B cell (primary cell): ENCODE measurements at regions of chr17 and their contacts with region 1.

Region 1: DNA sequence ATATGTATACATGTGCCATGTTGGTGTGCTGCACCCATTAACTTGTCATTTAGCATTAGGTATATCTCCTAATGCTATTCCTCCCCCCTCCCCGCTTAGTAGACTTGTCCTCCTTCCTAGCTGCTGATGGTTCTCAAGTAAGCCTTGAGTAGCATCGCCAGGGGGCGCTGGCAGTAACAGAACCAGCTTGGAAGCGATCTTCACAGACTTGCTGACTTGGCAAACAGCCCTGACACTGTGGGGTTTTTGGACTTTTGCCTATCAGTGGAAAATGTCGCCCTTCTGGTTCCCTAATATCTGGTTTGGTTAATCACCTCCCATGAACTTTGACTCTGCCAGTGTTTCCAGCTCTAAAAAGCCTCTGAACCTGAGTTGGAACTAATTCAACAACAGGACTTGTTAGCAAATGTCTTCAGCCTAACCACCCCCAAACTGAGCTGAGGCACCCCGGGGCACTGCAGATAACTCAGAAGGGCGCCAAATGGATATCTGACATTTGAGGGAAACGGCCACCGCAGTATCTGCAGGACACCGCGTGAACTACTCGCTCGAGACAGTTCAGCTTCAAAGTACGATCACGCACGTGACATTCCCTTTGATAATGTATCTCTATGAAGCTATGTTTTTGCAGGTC is 15.4 kb upstream of the SPATA32 start:
- DNase-seq: peak; percentile 91
- ATAC-seq: peak; percentile 94
- H3K4me3 ChIP-seq: no peak overlapping the region
- H3K4me3 Mint-ChIP-seq: no peak overlapping the region
- H3K27ac ChIP-seq: peak overlapping the region in 1 of 2 donors; percentile 48
- H3K27ac Mint-ChIP-seq: no peak overlapping the region
- H3K4me1 ChIP-seq: peaks cover 4 to 5% of the 10 kb centered on the region in 2 donors
- H3K4me1 Mint-ChIP-seq: peaks cover 6% of the 10 kb centered on the region
- H3K27me3 ChIP-seq: no peaks in the 10 kb centered on the region
- H3K27me3 Mint-ChIP-seq: no peaks in the 10 kb centered on the region
- CTCF ChIP-seq: peak; percentile 77

Region 2: DNA sequence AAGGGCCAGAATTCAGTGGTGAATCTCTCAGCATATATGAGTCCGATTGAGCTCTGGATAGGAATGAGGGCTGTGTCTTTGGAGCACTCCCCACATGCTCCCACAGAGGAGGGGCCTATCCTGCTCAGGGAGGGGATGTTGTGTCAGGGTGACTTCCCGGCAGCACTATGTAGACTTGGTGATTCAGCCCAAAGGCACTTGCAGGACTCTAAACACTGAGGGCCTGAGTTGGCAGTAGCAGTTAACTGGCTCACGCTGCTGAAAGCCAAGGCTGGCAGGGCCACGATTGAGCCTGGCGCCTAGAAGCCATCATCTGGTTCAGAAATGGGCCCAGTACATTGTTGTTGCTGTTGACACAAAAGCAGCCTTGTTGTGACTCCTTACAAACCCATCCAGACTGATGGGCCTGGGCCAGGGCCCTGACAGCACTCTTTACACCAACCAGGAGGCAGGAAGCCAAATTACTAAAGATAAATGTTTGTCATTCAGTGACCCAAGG is 184.4 kb before region 1 on chr17:
- CTCF ChIA-PET with region 1: no interaction called
- POLR2A ChIA-PET with region 1: no interaction called
- intact Hi-C with region 1: no loop called
- DNase-seq: no peak
- ATAC-seq: no peak
- H3K4me3 ChIP-seq: no peak overlapping the region
- H3K4me3 Mint-ChIP-seq: no peak overlapping the region
- H3K27ac ChIP-seq: no peak overlapping the region
- H3K27ac Mint-ChIP-seq: no peak overlapping the region
- H3K4me1 ChIP-seq: no peaks in the 10 kb centered on the region
- H3K4me1 Mint-ChIP-seq: peaks cover 2% of the 10 kb centered on the region
- H3K27me3 ChIP-seq: no peaks in the 10 kb centered on the region
- H3K27me3 Mint-ChIP-seq: no peaks in the 10 kb centered on the region
- CTCF ChIP-seq: no peak

Region 3: DNA sequence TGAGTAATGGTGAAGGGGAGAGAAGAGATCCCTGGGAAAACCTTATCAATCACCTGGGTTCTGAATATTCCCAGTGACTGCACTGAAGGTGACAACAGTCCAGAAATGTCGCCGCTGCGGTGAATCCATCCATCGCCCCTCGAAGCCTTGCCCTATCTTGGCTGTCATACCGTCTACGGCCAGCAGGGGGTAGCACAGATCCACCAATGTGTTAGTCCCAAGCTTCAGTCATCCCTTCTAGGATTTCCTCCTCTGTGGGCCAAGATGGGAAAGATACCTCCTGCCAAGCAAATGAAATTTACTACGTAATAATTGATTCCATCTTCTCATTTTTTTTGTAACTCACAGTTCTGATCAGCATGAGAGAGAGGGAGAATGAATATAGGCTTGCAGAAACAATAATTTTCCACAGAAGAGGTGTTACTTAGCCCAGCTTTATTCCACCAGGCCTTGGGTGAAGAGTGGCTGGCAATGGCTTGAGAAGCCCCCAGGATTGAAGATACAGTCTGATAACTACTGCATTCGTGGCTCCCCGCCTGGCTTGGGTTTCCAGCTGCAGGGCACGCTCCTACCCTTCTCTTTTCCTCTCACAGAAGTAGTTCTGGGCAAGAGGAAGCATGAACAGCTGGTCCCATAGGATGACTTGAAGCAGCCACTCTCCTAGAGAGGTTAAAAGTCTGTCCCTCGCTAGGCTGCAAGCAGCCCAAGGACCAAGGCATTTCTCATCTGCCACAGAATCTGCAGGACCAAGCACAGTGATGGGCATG is 58.3 kb before region 1 on chr17:
- CTCF ChIA-PET with region 1: interaction called, 115 read pairs
- POLR2A ChIA-PET with region 1: interaction called, 6 read pairs
- intact Hi-C with region 1: loop called (anchors 2 kb)
- DNase-seq: peak; percentile 88
- ATAC-seq: peak; percentile 28
- H3K4me3 ChIP-seq: no peak overlapping the region
- H3K4me3 Mint-ChIP-seq: peak overlapping the region; percentile 86
- H3K27ac ChIP-seq: no peak overlapping the region
- H3K27ac Mint-ChIP-seq: peak overlapping the region; percentile 82
- H3K4me1 ChIP-seq: peaks cover 19 to 37% of the 10 kb centered on the region in 2 donors
- H3K4me1 Mint-ChIP-seq: peaks cover 33% of the 10 kb centered on the region
- H3K27me3 ChIP-seq: no peaks in the 10 kb centered on the region
- H3K27me3 Mint-ChIP-seq: no peaks in the 10 kb centered on the region
- CTCF ChIP-seq: peak; percentile 93

Region 4: DNA sequence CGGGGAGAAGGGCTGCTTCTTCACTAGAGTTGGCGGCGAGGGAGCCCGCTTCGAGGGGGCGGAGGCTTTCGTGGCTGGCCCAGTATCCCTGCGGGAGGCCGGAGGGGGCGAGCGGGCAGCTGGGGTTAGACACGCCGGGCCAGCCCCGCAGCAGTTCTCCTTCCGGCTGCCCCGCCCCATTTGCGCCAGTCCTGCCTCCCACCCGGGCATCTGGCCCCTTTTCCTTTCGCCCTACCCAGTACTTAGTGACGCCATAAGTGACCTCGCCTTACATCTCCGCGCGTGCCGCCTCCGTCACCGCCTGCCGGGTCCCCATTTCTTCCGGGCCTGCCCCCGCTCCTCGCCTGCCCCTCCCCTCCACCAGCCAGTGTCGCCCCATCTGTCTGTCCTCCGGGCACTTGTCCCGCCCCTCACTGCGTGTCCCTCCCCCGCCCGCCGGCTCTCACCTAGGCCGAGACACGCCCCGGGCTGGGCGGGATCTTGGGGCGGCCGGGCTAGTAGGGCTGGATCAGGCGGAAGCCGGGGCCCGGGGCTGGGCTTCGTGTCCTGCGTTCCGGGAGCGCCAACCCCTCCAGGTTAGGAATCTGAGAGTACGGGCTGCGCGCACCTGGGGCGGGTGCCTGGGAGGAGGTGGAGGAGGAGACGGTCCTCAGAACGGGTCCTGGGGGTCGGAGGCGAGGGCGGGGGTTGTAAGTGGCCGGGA is 29.8 kb before region 1 on chr17:
- CTCF ChIA-PET with region 1: interaction called, 17 read pairs
- POLR2A ChIA-PET with region 1: interaction called, 10 read pairs
- intact Hi-C with region 1: no loop called
- DNase-seq: peak; percentile 97
- ATAC-seq: peak; percentile 88
- H3K4me3 ChIP-seq: peak overlapping the region; percentile 2 to 81 (median 78)
- H3K4me3 Mint-ChIP-seq: peak overlapping the region; percentile 92
- H3K27ac ChIP-seq: peak overlapping the region; percentile 82 to 92
- H3K27ac Mint-ChIP-seq: peak overlapping the region; percentile 96
- H3K4me1 ChIP-seq: peaks cover 20 to 22% of the 10 kb centered on the region in 2 donors
- H3K4me1 Mint-ChIP-seq: peaks cover 34% of the 10 kb centered on the region
- H3K27me3 ChIP-seq: no peaks in the 10 kb centered on the region
- H3K27me3 Mint-ChIP-seq: no peaks in the 10 kb centered on the region
- CTCF ChIP-seq: no peak

Region 5: DNA sequence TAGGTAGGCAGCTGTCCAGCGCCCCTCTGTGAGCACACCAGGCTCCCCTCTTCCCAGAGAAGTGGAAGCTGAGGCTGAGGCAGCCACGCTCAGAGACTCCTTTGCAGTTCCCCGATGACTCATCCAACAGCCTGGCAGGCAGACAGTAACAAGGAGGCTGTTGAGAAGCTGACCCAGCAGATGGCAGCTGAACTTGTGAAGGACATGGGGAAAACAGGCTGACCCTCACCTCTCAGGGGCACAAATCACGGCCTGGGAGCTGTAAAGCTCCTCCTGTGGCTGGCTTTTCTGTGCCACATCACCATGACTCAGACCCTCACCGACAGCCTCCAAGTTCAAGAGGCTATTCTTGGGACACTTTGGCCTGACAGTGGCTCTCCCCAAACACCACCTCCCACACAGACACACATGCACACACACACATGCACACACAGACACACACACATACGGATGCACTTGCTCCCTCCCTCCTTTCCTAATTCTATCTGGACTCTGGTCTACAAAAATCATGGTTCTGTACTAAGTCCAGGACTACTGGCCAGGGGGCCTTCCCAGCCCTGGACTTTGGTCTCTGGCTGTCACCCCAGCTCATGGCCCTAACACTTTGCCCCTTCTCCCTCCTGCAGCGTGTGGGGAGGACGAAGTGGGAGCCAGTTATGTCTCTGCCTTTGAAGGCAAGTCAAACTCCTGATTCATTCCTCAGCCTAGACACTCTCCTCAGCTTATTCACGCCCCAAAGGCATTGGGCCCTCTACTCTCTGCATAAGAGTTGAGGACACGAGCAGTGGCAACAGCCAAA is 16.3 kb after region 1 on chr17:
- CTCF ChIA-PET with region 1: interaction called, 44 read pairs
- POLR2A ChIA-PET with region 1: interaction called, 6 read pairs
- intact Hi-C with region 1: no loop called
- DNase-seq: no peak
- ATAC-seq: no peak
- H3K4me3 ChIP-seq: no peak overlapping the region
- H3K4me3 Mint-ChIP-seq: peak overlapping the region; percentile 56
- H3K27ac ChIP-seq: no peak overlapping the region
- H3K27ac Mint-ChIP-seq: peak overlapping the region; percentile 86
- H3K4me1 ChIP-seq: peaks cover 75 to 84% of the 10 kb centered on the region in 2 donors
- H3K4me1 Mint-ChIP-seq: peaks cover 78% of the 10 kb centered on the region
- H3K27me3 ChIP-seq: no peaks in the 10 kb centered on the region
- H3K27me3 Mint-ChIP-seq: no peaks in the 10 kb centered on the region
- CTCF ChIP-seq: no peak

Region 6: GRCh38 chr17:45332989-45333701 is 55.8 kb after region 1 on chr17:
- CTCF ChIA-PET with region 1: interaction called, 21 read pairs
- POLR2A ChIA-PET with region 1: interaction called, 3 read pairs
- intact Hi-C with region 1: no loop called
- DNase-seq: peak; percentile 57
- ATAC-seq: peak; percentile 89
- H3K4me3 ChIP-seq: no peak overlapping the region
- H3K4me3 Mint-ChIP-seq: peak overlapping the region; percentile 52
- H3K27ac ChIP-seq: peak overlapping the region in 1 of 2 donors; percentile 45
- H3K27ac Mint-ChIP-seq: peak overlapping the region; percentile 52
- H3K4me1 ChIP-seq: peaks cover 27 to 30% of the 10 kb centered on the region in 2 donors
- H3K4me1 Mint-ChIP-seq: peaks cover 39% of the 10 kb centered on the region
- H3K27me3 ChIP-seq: no peaks in the 10 kb centered on the region
- H3K27me3 Mint-ChIP-seq: no peaks in the 10 kb centered on the region
- CTCF ChIP-seq: no peak

Region 7: GRCh38 chr17:45385331-45385997 is 108.1 kb after region 1 on chr17:
- CTCF ChIA-PET with region 1: interaction called, 520 read pairs
- POLR2A ChIA-PET with region 1: interaction called, 5 read pairs
- intact Hi-C with region 1: loop called (anchors 1 kb)
- DNase-seq: peak; percentile 89
- ATAC-seq: peak; percentile 96
- H3K4me3 ChIP-seq: no peak overlapping the region
- H3K4me3 Mint-ChIP-seq: no peak overlapping the region
- H3K27ac ChIP-seq: no peak overlapping the region
- H3K27ac Mint-ChIP-seq: peak overlapping the region; percentile 16
- H3K4me1 ChIP-seq: peaks cover 5 to 12% of the 10 kb centered on the region in 2 donors
- H3K4me1 Mint-ChIP-seq: peaks cover 17% of the 10 kb centered on the region
- H3K27me3 ChIP-seq: peaks cover 0 to 12% (median 2%) of the 10 kb centered on the region in 4 experiments
- H3K27me3 Mint-ChIP-seq: peaks cover 16% of the 10 kb centered on the region
- CTCF ChIP-seq: peak; percentile 98

Region 8: GRCh38 chr17:45666046-45666600 is 388.8 kb after region 1 on chr17:
- CTCF ChIA-PET with region 1: no interaction called
- POLR2A ChIA-PET with region 1: no interaction called
- intact Hi-C with region 1: no loop called
- DNase-seq: no peak
- ATAC-seq: no peak
- H3K4me3 ChIP-seq: no peak overlapping the region
- H3K4me3 Mint-ChIP-seq: no peak overlapping the region
- H3K27ac ChIP-seq: no peak overlapping the region
- H3K27ac Mint-ChIP-seq: no peak overlapping the region
- H3K4me1 ChIP-seq: no peaks in the 10 kb centered on the region
- H3K4me1 Mint-ChIP-seq: no peaks in the 10 kb centered on the region
- H3K27me3 ChIP-seq: peaks cover 0 to 16% (median 2%) of the 10 kb centered on the region in 4 experiments
- H3K27me3 Mint-ChIP-seq: peaks cover 46% of the 10 kb centered on the region
- CTCF ChIP-seq: no peak